WTC11 (cell line): ENCODE measurements at regions of chr16 and their contacts with region 1.

Region 1: GRCh38 chr16:75062135-75062975 is 54.2 kb downstream of the LDHD start:
- DNase-seq: no peak
- ATAC-seq: peak; percentile 21; the same call in 1 of the 2 replicates
- H3K4me3 Mint-ChIP-seq: no peak overlapping the region
- H3K27ac Mint-ChIP-seq: peak overlapping the region; percentile 26; the same call in 1 of the 2 replicates
- H3K4me1 Mint-ChIP-seq: peaks cover 43% of the 10 kb centered on the region
- H3K27me3 Mint-ChIP-seq: no peaks in the 10 kb centered on the region
- CTCF ChIP-seq: no peak

Region 2: GRCh38 chr16:75072239-75072947 is 10.0 kb after region 1 on chr16:
- CTCF ChIA-PET with region 1: interaction called, 11 read pairs
- POLR2A ChIA-PET with region 1: no interaction called
- DNase-seq: no peak
- ATAC-seq: no peak
- H3K4me3 Mint-ChIP-seq: no peak overlapping the region
- H3K27ac Mint-ChIP-seq: no peak overlapping the region; the same call in 1 of the 2 replicates
- H3K4me1 Mint-ChIP-seq: peaks cover 35% of the 10 kb centered on the region
- H3K27me3 Mint-ChIP-seq: no peaks in the 10 kb centered on the region
- CTCF ChIP-seq: no peak

Region 3: DNA sequence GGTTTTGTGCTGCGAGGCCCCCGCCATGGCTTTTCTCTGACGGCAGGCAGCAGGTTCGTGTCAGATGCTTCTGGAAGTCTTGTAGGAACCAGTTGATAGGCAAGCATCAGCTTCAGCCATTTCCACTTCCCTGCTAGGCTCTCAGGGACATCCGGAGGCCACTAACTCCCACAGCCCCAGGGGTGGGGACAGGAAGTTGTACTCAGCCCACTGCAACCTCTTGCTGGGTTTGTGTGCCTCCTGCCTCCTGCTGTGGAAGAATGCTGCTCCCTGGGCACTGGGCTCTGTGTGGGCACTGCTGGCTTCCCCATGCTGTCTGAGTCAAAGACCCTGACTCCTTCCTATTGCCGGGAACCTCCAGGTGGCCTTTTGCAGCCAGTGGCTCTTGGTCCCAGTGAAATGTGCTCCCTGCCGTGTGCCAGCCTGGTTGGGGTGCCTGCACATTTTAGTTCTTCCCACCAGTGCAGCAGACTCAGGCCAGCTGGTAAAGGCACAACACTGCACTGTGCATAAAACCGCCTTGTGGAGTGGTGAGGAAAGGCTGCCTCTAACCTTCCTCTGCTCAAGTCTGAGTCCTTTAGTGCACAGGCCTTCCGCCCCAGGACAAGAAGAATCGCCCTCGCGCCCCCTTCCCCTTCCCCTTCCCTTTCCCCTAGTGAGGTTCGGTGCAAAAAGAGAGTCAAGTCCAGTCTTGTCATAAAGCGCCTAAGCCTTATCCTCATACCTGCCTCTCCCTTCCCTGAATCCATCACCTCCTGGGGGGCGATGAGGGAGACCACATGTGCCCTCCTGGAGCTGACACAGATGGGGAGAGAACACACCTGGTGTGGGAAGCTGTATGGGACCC is 37.6 kb after region 1 on chr16:
- CTCF ChIA-PET with region 1: interaction called, 10 read pairs
- POLR2A ChIA-PET with region 1: no interaction called
- DNase-seq: no peak
- ATAC-seq: peak; percentile 8
- H3K4me3 Mint-ChIP-seq: no peak overlapping the region
- H3K27ac Mint-ChIP-seq: peak overlapping the region; percentile 81
- H3K4me1 Mint-ChIP-seq: peaks cover 60% of the 10 kb centered on the region
- H3K27me3 Mint-ChIP-seq: no peaks in the 10 kb centered on the region
- CTCF ChIP-seq: no peak